Activated CD4-positive, alpha-beta memory T cell treated with anti-CD3 and anti-CD28 coated beads for 36 hours (primary cell): ENCODE measurements at regions of chr10 and their contacts with region 1.

Region 1: GRCh38 chr10:102673819-102674511 is 29.7 kb downstream of the TRIM8 start:
- DNase-seq: peak; percentile 82
- H3K4me3 Mint-ChIP-seq: peak overlapping the region; percentile 64
- H3K27ac Mint-ChIP-seq: peak overlapping the region; percentile 34
- H3K4me1 Mint-ChIP-seq: peaks cover 33% of the 10 kb centered on the region
- H3K27me3 Mint-ChIP-seq: no peaks in the 10 kb centered on the region

Region 2: GRCh38 chr10:102660888-102661657 is 12.9 kb before region 1 on chr10:
- CTCF ChIA-PET with region 1: interaction called, 13 read pairs
- POLR2A ChIA-PET with region 1: interaction called, 13 read pairs
- intact Hi-C with region 1: loop called (anchors 1 kb)
- DNase-seq: peak; percentile 88
- H3K4me3 Mint-ChIP-seq: peak overlapping the region; percentile 62
- H3K27ac Mint-ChIP-seq: peak overlapping the region; percentile 87
- H3K4me1 Mint-ChIP-seq: peaks cover 44% of the 10 kb centered on the region
- H3K27me3 Mint-ChIP-seq: no peaks in the 10 kb centered on the region